Astrocyte of the spinal cord (primary cell): ENCODE measurements at regions of chr9 and their contacts with region 1.

Region 1: GRCh38 chr9:134316449-134317160 is 9.7 kb upstream of the RXRA start:
- DNase-seq: peak; percentile 48
- H3K4me3 ChIP-seq: no peak overlapping the region
- CTCF ChIP-seq: no peak

Region 2: GRCh38 chr9:133992780-133993634 is 323.6 kb before region 1 on chr9:
- in situ Hi-C with region 1: no loop called
- DNase-seq: peak; percentile 90
- H3K4me3 ChIP-seq: peak overlapping the region; percentile 68
- CTCF ChIP-seq: peak; percentile 57

Region 3: GRCh38 chr9:134449221-134449894 is 132.8 kb after region 1 on chr9:
- in situ Hi-C with region 1: loop called (anchors 10 kb)
- DNase-seq: peak; percentile 95
- H3K4me3 ChIP-seq: no peak overlapping the region
- CTCF ChIP-seq: peak; percentile 91